Testis (tissue), 5 donors: ENCODE measurements at regions of chr15 and their contacts with region 1.

Region 1: GRCh38 chr15:42419369-42419768 is 60.1 kb downstream of the CAPN3 start:
- DNase-seq: no peak
- H3K4me3 ChIP-seq: no peak overlapping the region
- H3K27ac ChIP-seq: no peak overlapping the region
- H3K4me1 ChIP-seq: no peaks in the 10 kb centered on the region
- H3K27me3 ChIP-seq: no peaks in the 10 kb centered on the region
- CTCF ChIP-seq: no peak
- POLR2A ChIP-seq: no peak

Region 2: GRCh38 chr15:42465520-42466259 is 46.3 kb after region 1 on chr15:
- intact Hi-C with region 1: loop called (anchors 5 kb)
- DNase-seq: no peak
- H3K4me3 ChIP-seq: no peak overlapping the region
- H3K27ac ChIP-seq: no peak overlapping the region
- H3K4me1 ChIP-seq: peaks cover 13% of the 10 kb centered on the region
- H3K27me3 ChIP-seq: no peaks in the 10 kb centered on the region
- CTCF ChIP-seq: no peak
- POLR2A ChIP-seq: no peak

Region 3: DNA sequence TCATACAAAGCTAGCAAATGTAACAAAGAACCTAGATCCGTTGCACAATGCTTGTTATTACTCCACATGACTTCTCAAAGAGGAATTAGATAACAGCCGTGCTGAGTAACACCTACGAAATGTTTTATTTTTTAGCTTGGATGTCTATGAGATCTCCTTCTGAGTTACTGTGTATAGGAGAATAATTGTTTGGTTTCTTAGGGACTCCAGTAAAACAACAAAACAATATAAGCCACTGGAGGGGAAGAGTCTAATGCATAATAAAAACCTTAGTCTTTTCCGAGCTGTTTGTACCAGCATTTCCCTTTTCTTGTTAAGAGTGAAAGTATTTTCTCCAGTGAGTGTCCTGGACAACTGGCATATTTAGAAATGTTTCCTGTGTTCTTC is 91.6 kb after region 1 on chr15:
- intact Hi-C with region 1: no loop called
- DNase-seq: no peak
- H3K4me3 ChIP-seq: no peak overlapping the region
- H3K27ac ChIP-seq: peak overlapping the region; percentile 49 to 84
- H3K4me1 ChIP-seq: peaks cover 33% of the 10 kb centered on the region
- H3K27me3 ChIP-seq: no peaks in the 10 kb centered on the region
- CTCF ChIP-seq: no peak
- POLR2A ChIP-seq: no peak